ENCODE measurements at regions of chr19 and their contacts with region 1.

Region 1: GRCh38 chr19:13214036-13214730 is 64.0 kb downstream of the IER2 start:
- DNase-seq: no peak
- H3K4me3 ChIP-seq: no peak overlapping the region
- H3K27ac ChIP-seq: no peak overlapping the region
- H3K4me1 ChIP-seq: no peaks in the 10 kb centered on the region
- H3K27me3 ChIP-seq: no peaks in the 10 kb centered on the region
- CTCF ChIP-seq: no peak

Region 2: GRCh38 chr19:13228561-13228960 is 14.4 kb after region 1 on chr19:
- CTCF ChIA-PET with region 1: interaction called, 12 read pairs
- POLR2A ChIA-PET with region 1: no interaction called
- intact Hi-C with region 1: no loop called
- DNase-seq: no peak
- H3K4me3 ChIP-seq: no peak overlapping the region
- H3K27ac ChIP-seq: no peak overlapping the region
- H3K4me1 ChIP-seq: peaks cover 11% of the 10 kb centered on the region
- H3K27me3 ChIP-seq: peaks cover 18% of the 10 kb centered on the region
- CTCF ChIP-seq: no peak; the same call in 1 of the 2 replicates

Region 3: DNA sequence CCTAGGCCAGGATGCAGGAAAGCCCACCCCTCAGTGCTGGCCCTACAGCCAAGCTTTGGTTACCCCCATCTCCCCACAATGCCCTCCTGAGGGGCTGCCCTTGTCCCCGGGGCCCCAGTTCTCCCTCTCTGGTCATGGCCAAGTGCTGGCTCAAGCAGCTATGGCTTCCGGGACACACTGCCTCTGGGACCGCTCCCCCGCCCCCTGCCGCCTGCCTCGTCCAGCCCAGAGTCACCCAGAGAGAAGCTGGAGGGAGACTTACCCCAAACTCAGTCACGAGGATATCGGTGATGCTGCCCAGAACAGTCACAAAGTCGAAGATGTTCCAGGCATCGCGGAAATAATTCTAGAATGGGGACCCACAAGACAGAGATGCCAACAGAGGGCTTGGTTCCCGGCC is 30.7 kb after region 1 on chr19:
- CTCF ChIA-PET with region 1: no interaction called
- POLR2A ChIA-PET with region 1: interaction called, 11 read pairs
- intact Hi-C with region 1: no loop called
- DNase-seq: no peak
- H3K4me3 ChIP-seq: no peak overlapping the region
- H3K27ac ChIP-seq: no peak overlapping the region
- H3K4me1 ChIP-seq: 0 out of 2 replicates have a peak, but pooled peaks cover 3% of the 10 kb centered on the region
- H3K27me3 ChIP-seq: no peaks in the 10 kb centered on the region
- CTCF ChIP-seq: no peak